Left cardiac atrium (tissue), 4 donors: ENCODE measurements at regions of chr11 and their contacts with region 1.

Region 1: GRCh38 chr11:19951558-19952115 is 208.6 kb downstream of the DBX1 start:
- DNase-seq: no peak
- ATAC-seq: peak; percentile 5 to 40

Region 2: GRCh38 chr11:20013346-20014066 is 61.9 kb after region 1 on chr11:
- intact Hi-C with region 1: loop called in 1 of 2 experiments (anchors 10 kb)
- DNase-seq: no peak
- ATAC-seq: peak; percentile 67 to 80

Region 3: DNA sequence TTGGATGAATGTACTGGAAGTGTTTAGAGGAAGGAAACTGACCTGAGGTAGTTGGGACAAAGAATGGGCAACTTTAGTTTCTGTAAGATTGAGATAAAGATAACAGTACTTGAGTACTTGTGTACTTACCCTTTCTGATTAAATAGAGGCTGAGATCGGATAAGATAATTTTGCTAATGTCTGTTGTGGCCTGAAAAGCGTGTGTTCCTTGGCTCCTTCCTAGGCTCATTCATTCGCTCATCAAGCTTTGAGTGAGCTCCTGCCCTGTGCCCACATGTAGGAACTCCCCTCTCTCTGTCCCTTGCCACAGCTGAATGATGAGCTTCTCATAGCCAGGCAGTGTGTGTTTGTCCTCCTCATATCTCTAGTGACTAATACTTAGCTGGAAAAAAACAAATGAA is 90.5 kb after region 1 on chr11:
- intact Hi-C with region 1: loop called in 1 of 2 experiments (anchors 10 kb)
- DNase-seq: no peak
- ATAC-seq: peak in 1 of 2 donors; percentile 68

Region 4: GRCh38 chr11:20110908-20111669 is 159.5 kb after region 1 on chr11:
- intact Hi-C with region 1: loop called (anchors 5 to 10 kb)
- DNase-seq: no peak
- ATAC-seq: peak; percentile 33 to 61